ENCODE measurements at regions of chr2 and their contacts with region 1.

Region 1: DNA sequence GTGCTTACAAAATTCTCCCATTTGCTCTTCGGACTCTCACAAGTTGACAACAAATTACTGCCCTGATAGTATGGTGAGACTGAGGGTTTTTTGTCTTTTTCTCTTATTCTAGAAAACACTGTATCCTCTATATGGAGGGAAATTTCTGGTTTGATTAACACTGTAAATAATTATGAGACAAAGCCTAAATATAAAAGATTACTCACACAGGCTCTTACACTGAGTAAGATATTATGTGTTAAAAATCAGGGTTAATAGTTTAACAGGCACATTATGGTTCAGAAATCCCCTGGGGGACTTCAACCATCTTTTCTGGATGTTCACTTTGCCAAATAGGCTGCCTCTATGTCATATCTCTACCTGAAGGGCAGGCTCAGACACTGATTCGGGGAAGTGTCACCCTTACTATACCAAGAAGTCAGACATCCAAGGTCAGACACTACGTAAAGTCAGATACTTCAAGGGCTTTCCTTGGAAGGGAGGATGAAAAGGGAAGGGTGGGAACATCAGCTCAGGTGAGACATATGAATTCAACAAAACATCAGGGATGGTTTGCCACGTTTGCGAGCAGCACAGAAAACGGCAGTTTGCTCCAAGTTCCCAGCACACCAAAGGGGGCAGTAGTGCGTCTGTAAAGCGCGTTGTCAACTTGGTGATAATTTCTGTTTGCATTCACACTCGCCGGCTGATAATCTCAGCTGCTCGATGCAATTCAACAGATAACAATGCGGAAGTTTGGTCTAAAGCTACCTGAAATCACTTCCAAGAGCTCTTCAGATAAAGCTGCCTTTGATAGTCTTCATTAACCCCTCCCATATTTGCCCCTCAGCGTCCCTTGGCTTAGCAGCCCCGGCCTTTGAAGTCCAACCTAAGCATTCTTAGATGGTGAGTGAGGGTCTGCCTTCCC is 972 bp upstream of the RASGRP3 start:
- DNase-seq: peak; percentile 86
- H3K4me3 Mint-ChIP-seq: peak overlapping the region; percentile 80
- H3K27ac Mint-ChIP-seq: peak overlapping the region; percentile 98
- H3K4me1 Mint-ChIP-seq: peaks cover 36% of the 10 kb centered on the region
- H3K27me3 Mint-ChIP-seq: peaks cover 1% of the 10 kb centered on the region

Region 2: GRCh38 chr2:33406622-33407021 is 68.9 kb before region 1 on chr2:
- CTCF ChIA-PET with region 1: no interaction called
- POLR2A ChIA-PET with region 1: no interaction called
- DNase-seq: no peak
- H3K4me3 Mint-ChIP-seq: no peak overlapping the region
- H3K27ac Mint-ChIP-seq: no peak overlapping the region
- H3K4me1 Mint-ChIP-seq: no peaks in the 10 kb centered on the region
- H3K27me3 Mint-ChIP-seq: peaks cover 10% of the 10 kb centered on the region

Region 3: DNA sequence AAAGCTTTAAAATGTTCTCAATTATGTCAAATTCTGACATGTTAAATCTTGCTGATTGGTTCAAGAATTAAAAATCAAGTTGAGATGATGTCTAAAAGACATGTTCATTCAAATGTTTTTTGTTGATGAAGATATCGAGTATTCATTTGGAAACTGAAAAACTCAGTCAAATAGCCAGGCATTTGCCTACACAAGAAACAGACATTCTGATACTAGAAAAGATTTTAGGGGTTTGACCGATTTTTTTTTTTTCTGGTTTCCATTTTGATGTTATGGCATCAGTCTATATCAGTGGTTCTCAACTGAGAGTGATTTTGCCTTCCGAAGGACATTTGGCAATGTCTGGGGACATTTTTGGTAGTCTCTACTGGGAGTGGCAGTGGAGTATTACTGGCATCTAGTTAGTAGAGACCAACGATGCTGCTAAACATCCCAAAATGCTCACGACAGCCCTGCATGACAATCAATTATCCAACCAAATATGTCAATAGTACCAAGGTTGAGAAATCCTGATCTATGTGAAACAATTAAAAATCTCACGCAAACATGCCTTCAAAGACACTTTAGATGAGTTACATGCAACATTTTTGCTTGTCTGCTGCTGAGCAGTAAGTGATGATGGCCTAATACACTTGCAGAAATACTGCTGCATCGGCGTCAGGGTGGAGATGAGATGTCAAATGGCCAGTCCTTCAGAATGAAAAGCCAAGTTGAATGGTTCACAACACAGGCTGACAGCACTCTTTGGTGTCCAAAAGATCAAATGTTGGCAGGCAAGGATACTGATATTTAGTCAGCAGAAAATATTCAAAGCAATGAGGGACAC is 13.5 kb after region 1 on chr2:
- CTCF ChIA-PET with region 1: interaction called, 12 read pairs
- POLR2A ChIA-PET with region 1: interaction called, 23 read pairs
- DNase-seq: no peak
- H3K4me3 Mint-ChIP-seq: no peak overlapping the region
- H3K27ac Mint-ChIP-seq: peak overlapping the region; percentile 56
- H3K4me1 Mint-ChIP-seq: peaks cover 48% of the 10 kb centered on the region
- H3K27me3 Mint-ChIP-seq: peaks cover 2% of the 10 kb centered on the region

Region 4: GRCh38 chr2:33497221-33497650 is 21.8 kb after region 1 on chr2:
- CTCF ChIA-PET with region 1: interaction called, 12 read pairs
- POLR2A ChIA-PET with region 1: interaction called, 23 read pairs
- DNase-seq: no peak
- H3K4me3 Mint-ChIP-seq: no peak overlapping the region
- H3K27ac Mint-ChIP-seq: peak overlapping the region; percentile 18
- H3K4me1 Mint-ChIP-seq: peaks cover 48% of the 10 kb centered on the region
- H3K27me3 Mint-ChIP-seq: peaks cover 2% of the 10 kb centered on the region

Region 5: GRCh38 chr2:33599175-33599942 is 123.9 kb after region 1 on chr2 and contains the start of gene FAM98A:
- CTCF ChIA-PET with region 1: interaction called, 23 read pairs
- POLR2A ChIA-PET with region 1: interaction called, 45 read pairs
- DNase-seq: peak; percentile 98
- H3K4me3 Mint-ChIP-seq: peak within 1 kb of the TSS; percentile 96
- H3K27ac Mint-ChIP-seq: peak within 1 kb of the TSS; percentile 82
- H3K4me1 Mint-ChIP-seq: peaks cover 28% of the 10 kb centered on the region
- H3K27me3 Mint-ChIP-seq: no peaks in the 10 kb centered on the region
- total RNA-seq, gene FAM98A: 31.3 to 32.2 TPM

Region 6: DNA sequence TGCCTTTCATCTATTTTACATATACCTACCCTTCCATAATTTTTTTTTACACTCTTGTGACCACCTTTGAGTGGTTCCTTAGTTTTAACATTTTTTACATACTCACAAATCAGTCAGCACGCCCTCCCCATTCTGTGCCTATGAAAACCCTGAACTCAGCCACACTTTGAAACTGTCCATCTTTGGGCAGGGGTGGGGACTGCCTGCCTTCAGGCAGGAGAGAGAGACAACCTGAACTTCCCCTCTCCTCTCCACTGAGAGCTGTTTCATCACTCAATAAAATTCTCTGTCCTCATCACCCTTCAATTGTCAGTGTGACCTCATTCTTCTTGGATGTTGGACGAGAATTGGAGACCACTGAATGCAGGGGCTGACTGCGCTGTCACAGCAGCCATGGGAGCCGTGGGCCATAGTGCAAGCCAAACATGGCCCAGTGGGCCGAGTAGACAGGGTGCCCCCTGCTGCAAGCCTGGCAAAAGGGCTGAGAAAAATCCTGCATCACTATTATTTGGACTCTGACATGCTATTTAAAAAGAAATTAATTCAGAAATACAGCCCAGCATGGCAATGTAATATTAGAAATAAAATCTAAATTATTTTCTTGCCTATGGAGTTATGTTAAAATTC is 191.3 kb after region 1 on chr2:
- CTCF ChIA-PET with region 1: no interaction called
- POLR2A ChIA-PET with region 1: no interaction called
- DNase-seq: no peak
- H3K4me3 Mint-ChIP-seq: no peak overlapping the region
- H3K27ac Mint-ChIP-seq: no peak overlapping the region
- H3K4me1 Mint-ChIP-seq: no peaks in the 10 kb centered on the region
- H3K27me3 Mint-ChIP-seq: no peaks in the 10 kb centered on the region

Region 7: DNA sequence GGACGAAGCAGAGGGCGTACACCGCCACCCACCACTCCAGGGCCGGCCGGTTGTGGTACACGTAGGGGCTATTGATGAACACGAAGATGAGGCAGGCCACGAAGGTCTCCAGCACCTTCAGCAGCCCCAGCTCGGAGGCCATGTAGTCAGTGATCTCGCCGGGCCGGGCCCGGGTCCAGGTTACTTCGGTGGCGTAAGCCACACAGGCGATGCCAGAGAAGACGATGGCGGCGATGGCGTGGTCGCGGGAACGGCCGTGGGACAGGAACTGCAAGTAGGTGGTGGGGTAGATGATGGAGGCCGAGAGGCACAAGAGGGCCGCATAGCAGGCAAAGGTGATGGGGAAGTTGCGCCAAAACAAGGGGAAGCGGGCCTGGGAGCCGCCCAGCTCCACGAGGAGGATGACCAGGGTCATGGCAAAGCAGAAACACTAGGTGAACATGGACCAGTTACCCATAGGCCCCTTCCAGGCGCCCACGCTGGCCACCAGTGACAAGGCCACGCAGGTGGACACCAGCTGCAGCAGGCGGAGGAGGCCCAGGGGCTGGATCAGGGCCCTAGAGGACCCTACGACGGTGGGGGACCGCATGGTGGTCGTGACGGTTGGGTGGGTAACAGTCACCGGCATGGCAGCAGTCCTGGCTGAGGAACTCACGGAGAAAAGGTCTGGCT is 252.0 kb after region 1 on chr2:
- CTCF ChIA-PET with region 1: no interaction called
- POLR2A ChIA-PET with region 1: no interaction called
- DNase-seq: no peak
- H3K4me3 Mint-ChIP-seq: no peak overlapping the region
- H3K27ac Mint-ChIP-seq: no peak overlapping the region
- H3K4me1 Mint-ChIP-seq: no peaks in the 10 kb centered on the region
- H3K27me3 Mint-ChIP-seq: no peaks in the 10 kb centered on the region